ENCODE measurements at regions of chr17 and their contacts with region 1.

Region 1: DNA sequence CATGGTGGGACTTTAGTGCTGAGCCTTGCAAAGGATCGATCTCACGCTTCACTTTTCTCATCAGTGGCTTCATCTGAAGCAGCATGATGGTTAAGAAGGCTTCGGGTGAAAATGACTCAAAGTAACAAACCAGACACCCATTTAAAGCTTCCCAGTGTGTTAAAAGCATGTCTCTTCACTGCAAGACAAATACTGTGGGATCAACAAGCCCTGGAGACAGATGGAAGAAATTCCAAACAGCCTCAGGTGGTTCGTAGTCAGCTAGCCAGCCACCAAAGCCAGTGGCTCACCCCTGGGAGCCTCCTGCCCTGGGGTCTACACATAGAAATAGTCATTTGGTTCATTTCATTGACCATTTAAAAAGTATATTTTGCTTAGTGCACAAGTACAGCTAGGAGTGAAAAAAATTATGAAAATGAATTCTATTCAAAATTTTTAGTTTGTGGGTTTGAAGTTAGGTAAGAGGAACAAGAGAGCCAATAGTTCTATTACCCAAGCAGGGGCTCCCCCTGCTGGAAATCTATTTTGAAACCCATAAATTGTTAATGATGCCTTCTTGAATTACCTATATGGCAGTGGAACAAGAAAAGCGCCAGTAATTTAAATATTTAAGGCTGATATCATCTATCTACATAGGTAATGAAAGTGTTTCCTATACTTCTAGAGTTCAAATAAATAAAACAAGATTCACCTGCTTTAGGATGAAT is 51.6 kb downstream of the PMP22 start:
- DNase-seq: no peak
- H3K4me3 ChIP-seq: no peak overlapping the region
- H3K27me3 ChIP-seq: peaks cover 3% of the 10 kb centered on the region; the same call in 1 of the 2 replicates
- CTCF ChIP-seq: peak; percentile 48

Region 2: DNA sequence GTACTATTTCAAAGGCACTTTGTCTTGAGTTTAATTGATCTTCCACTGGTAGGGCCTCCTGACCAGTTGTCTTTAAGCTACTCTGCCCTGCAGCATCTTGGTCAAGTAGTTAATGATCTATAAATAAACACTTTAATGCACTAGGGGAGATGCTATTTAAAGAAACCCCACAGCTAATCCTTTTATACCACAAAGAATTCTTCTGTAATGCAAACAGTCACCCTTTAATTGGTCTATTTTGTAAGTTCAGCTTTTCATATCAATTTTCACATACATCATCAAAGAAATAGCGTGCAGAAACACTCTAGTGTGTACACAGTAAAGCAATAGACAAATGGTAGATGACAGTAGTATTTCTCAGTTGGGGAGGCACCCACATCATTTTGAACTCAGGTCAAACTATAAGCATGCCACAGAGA is 18.7 kb before region 1 on chr17:
- CTCF ChIA-PET with region 1: interaction called, 13 read pairs
- POLR2A ChIA-PET with region 1: no interaction called
- DNase-seq: no peak
- H3K4me3 ChIP-seq: no peak overlapping the region
- H3K27me3 ChIP-seq: 0 out of 2 replicates have a peak, but pooled peaks cover 2% of the 10 kb centered on the region
- CTCF ChIP-seq: no peak